ENCODE measurements at regions of chr4 and their contacts with region 1.

Region 1: DNA sequence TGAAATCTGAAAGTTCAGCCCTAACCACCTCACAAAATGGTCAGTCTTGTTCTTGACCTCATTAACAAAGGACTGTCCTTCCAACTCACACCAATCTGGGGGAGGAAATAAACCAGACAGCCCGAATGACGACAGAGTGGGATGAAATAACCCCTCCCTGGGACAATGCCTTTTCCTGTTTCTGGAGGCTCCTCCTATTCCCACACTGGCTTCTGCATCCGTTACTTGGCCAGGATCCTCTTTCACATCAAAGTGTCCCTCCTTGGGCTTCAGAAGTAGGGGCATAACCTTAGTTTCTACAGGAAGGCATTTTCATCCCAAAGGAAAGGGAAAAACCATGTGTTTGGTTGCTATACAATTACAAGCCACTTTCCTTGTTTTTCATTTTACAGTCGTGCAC is 59.8 kb upstream of the RPL34 start:
- DNase-seq: no peak
- CTCF ChIP-seq: no peak

Region 2: DNA sequence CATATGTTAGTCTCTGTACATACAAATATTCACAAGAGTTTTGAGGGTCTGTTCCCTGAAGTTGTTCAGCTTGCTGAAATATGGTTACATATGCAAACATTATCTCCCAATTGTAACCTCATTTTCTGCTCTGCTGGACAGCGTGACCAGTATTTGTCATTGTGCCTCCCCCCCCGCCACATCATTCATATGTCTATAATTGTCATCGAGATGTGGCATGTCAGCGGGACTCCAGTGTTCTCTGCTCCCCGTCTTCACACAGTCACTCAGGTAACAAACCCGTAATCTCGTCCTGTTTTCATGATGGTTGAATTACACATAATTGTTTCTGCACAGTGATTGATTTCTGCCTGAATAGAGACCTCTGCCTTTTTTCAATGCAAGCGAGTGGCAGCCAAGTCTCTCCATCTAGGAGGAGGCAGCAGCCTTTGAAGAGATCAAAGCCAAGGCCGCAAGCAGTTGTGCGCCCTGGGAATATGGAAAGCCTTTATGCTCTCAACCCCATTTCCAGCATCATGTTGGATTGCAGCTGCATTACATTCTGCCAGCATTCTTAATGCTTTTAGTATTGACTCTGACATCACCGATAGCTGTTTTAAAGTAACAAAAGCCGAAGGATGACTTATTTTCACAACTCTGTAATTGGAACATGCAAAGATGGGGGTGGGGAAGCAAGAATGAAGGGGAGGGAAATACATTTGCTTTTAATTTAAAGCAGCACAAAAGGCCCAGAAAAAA is 419.2 kb before region 1 on chr4:
- in situ Hi-C with region 1: no loop called
- DNase-seq: peak; percentile 26
- CTCF ChIP-seq: no peak

Region 3: DNA sequence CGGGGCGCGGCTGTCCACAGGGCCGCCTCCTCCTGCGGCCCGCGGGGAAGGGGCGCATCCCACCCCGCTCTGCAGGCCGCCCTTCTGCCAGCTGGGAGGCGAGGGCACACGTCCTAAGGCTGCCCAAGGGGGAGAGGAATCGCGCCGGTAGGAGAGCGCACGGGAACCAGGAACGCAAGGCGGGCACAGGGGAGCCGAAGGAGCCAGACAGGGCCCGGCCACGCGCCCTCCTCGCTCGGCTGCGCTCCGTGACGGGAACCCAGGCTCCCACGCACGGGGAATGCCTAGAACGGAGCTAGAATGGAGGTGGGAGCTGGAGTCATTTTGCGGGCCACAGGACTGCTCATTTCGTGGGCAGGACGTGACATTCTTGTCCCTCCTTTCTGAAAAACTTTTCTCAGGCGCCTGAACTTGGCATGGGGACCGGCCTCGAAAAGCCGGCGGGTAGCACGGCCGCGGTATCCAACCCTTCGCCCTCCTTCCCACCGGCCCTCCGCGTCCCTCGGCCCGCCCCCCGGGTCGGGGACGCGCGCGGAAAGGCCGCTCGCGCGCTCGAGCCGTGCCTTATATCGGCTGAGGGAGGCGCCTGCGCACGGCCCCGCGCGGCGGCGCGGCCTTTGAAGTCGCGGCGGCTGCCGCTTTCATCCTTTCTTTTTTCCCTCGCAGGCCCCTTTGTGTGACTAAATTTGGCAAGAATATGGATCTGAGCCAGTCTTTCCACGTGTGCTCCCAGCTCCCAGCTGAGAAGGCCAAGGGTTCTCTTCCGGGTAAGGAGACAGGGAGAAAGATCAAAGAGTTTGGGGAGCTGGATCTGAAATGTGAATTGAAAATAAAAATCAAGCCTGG is 387.6 kb before region 1 on chr4:
- in situ Hi-C with region 1: loop called (anchors 10 kb)
- DNase-seq: peak; percentile 82
- CTCF ChIP-seq: no peak

Measured in GM13976 (cell line).